Naive thymus-derived CD4-positive, alpha-beta T cell (primary cell): ENCODE measurements at regions of chr19 and their contacts with region 1.

Region 1: GRCh38 chr19:18000935-18001778 is 6.8 kb upstream of the ARRDC2 start:
- DNase-seq: peak; percentile 89 to 96 (median 95)
- ATAC-seq: peak; percentile 90
- H3K4me3 ChIP-seq: peak overlapping the region; percentile 78
- H3K4me3 Mint-ChIP-seq: peak overlapping the region; percentile 85 to 98 (median 93)
- H3K27ac ChIP-seq: peak overlapping the region; percentile 97
- H3K27ac Mint-ChIP-seq: peak overlapping the region; percentile 94 to 100 (median 99)
- H3K4me1 ChIP-seq: peaks cover 19 to 24% of the 10 kb centered on the region in 2 donors
- H3K4me1 Mint-ChIP-seq: peaks cover 10 to 35% (median 18%) of the 10 kb centered on the region in 7 donors
- H3K27me3 ChIP-seq: no peaks in the 10 kb centered on the region
- H3K27me3 Mint-ChIP-seq: peaks cover 0 to 2% (median 0%) of the 10 kb centered on the region in 5 donors

Region 2: DNA sequence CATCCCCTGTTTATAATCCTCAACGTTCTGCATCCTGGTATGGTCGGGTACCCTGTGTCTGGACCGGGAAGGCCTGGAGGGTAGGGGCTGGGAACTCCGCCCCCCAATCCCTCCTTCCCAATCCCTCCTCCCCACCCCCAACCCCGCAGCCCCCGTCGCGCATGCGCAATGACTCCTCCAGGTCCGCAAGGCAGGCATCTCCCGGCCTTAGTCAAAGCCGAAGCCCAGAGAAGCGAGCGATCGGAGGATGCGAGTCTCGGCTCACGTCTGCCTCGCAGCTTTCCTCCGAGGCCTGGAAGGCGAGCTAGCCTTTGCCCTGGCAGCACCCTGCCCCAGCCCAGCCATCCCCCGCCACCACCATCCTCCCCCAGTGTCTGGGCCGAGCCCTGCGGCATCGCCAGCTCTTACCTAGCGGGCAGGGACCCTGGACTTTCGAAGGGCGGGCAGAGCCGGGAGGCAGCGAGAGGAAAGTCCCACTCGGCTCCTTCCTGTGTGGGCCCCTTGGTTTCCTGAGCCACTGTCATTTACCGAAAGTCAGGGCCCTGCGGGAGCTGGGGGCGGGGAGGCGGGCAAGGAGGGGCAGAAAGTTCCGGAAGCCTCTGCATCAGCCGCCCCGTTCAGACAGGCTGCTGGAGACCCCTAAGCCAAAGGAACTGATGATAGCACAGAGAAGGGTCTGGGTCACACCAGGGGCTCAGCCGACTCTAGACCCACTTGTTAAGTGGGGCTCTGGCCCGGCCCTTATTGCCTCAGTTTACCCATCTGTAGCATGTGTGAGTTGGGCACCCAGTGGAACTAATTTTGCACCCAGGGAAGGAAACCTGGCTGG is 153.4 kb before region 1 on chr19 and contains the start of gene JAK3:
- CTCF ChIA-PET with region 1: no interaction called
- POLR2A ChIA-PET with region 1: interaction called, 3 read pairs
- intact Hi-C with region 1: loop called in 1 of 2 experiments (anchors 2 kb)
- DNase-seq: peak; percentile 66 to 91 (median 88)
- ATAC-seq: peak; percentile 89
- H3K4me3 ChIP-seq: peak within 1 kb of the TSS; percentile 86
- H3K4me3 Mint-ChIP-seq: peak within 1 kb of the TSS; percentile 87 to 97 (median 93)
- H3K27ac ChIP-seq: peak within 1 kb of the TSS; percentile 95
- H3K27ac Mint-ChIP-seq: peak within 1 kb of the TSS; percentile 92 to 100 (median 97)
- H3K4me1 ChIP-seq: peaks cover 55 to 70% of the 10 kb centered on the region in 2 donors
- H3K4me1 Mint-ChIP-seq: peaks cover 45 to 77% (median 65%) of the 10 kb centered on the region in 7 donors
- H3K27me3 ChIP-seq: no peaks in the 10 kb centered on the region
- H3K27me3 Mint-ChIP-seq: peaks cover 0 to 2% (median 0%) of the 10 kb centered on the region in 5 donors
- total RNA-seq, gene JAK3: 154 to 296 (median 202) TPM

Region 3: GRCh38 chr19:17932485-17933338 is 68.4 kb before region 1 on chr19 and contains the start of gene CCDC124:
- CTCF ChIA-PET with region 1: interaction called, 224 read pairs
- POLR2A ChIA-PET with region 1: interaction called, 11 read pairs
- intact Hi-C with region 1: no loop called
- DNase-seq: peak; percentile 89 to 96 (median 94)
- ATAC-seq: peak; percentile 99
- H3K4me3 ChIP-seq: peak within 1 kb of the TSS; percentile 69
- H3K4me3 Mint-ChIP-seq: peak within 1 kb of the TSS; percentile 85 to 97 (median 93)
- H3K27ac ChIP-seq: peak within 1 kb of the TSS; percentile 86
- H3K27ac Mint-ChIP-seq: peak within 1 kb of the TSS; percentile 90 to 97 (median 95)
- H3K4me1 ChIP-seq: peaks cover 10 to 11% of the 10 kb centered on the region in 2 donors
- H3K4me1 Mint-ChIP-seq: peaks cover 6 to 24% (median 15%) of the 10 kb centered on the region in 7 donors
- H3K27me3 ChIP-seq: no peaks in the 10 kb centered on the region
- H3K27me3 Mint-ChIP-seq: peaks cover 0 to 2% (median 0%) of the 10 kb centered on the region in 5 donors
- total RNA-seq, gene CCDC124: 28.7 to 60.5 (median 32.6) TPM

Region 4: DNA sequence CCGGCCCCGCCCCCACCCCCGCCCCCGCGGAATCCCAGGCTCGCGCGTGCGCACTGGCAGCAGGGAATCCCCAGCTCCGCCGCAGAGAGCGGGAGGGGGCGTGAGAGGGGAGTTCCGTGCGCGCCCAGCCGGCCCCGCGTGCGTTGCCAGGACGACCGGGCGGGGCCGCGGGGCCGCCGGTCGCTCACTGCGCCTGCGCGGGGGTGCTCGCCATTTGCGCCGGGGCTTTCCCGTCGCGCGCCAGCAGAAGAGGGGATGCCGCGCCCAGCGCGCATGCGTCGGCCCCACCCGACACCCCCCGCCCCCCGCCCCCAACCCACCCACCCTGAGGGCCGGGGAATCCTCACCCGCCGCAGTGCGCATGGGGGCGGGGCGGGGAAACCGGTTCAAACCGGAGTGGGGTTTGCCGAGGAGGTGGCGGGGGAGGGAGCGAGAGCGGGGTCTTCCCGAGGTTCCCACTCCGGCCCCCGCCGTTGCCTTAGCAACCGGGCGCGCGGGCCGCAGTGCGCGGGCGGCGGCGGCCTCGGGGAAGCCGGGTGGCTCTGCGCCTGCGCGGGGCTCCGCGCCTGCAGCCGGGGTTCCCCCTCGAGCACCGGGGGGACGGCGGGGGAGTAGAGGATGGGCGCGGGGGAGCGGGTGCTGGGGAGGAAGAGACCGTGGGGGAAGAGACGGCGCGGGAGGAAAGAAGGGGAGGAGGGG is 53.2 kb before region 1 on chr19:
- CTCF ChIA-PET with region 1: interaction called, 23 read pairs
- POLR2A ChIA-PET with region 1: interaction called, 14 read pairs
- intact Hi-C with region 1: loop called (anchors 1 to 2 kb)
- DNase-seq: peak; percentile 91 to 99 (median 95)
- ATAC-seq: peak; percentile 87
- H3K4me3 ChIP-seq: peak overlapping the region; percentile 41
- H3K4me3 Mint-ChIP-seq: peak overlapping the region; percentile 68 to 88 (median 82)
- H3K27ac ChIP-seq: peak overlapping the region; percentile 99
- H3K27ac Mint-ChIP-seq: peak overlapping the region in 7 of 9 donors; percentile 48 to 96 (median 87)
- H3K4me1 ChIP-seq: peaks cover 37 to 50% of the 10 kb centered on the region in 2 donors
- H3K4me1 Mint-ChIP-seq: peaks cover 22 to 55% (median 43%) of the 10 kb centered on the region in 7 donors
- H3K27me3 ChIP-seq: peaks cover 18 to 28% of the 10 kb centered on the region in 2 donors
- H3K27me3 Mint-ChIP-seq: peaks cover 27 to 43% (median 30%) of the 10 kb centered on the region in 5 donors

Region 5: DNA sequence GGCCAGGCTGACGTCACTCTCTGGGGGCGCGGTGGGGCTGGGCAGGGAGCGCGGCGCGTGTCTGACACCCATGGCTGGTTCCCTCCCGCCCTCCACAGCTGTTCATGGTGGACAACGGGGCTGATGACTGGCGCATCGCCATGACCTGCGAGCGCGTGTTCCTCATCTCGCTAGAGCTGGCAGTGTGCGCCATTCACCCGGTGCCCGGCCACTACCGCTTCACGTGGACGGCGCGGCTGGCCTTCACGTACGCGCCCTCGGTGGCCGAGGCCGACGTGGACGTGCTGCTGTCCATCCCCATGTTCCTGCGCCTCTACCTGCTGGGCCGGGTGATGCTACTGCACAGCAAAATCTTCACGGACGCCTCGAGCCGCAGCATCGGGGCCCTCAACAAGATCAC is 19.5 kb before region 1 on chr19:
- CTCF ChIA-PET with region 1: no interaction called
- POLR2A ChIA-PET with region 1: no interaction called
- intact Hi-C with region 1: no loop called
- DNase-seq: no peak
- ATAC-seq: no peak
- H3K4me3 ChIP-seq: no peak overlapping the region
- H3K4me3 Mint-ChIP-seq: no peak overlapping the region
- H3K27ac ChIP-seq: no peak overlapping the region
- H3K27ac Mint-ChIP-seq: no peak overlapping the region
- H3K4me1 ChIP-seq: no peaks in the 10 kb centered on the region
- H3K4me1 Mint-ChIP-seq: peaks cover 0 to 9% (median 0%) of the 10 kb centered on the region in 7 donors
- H3K27me3 ChIP-seq: no peaks in the 10 kb centered on the region
- H3K27me3 Mint-ChIP-seq: peaks cover 5 to 22% (median 10%) of the 10 kb centered on the region in 5 donors

Region 6: DNA sequence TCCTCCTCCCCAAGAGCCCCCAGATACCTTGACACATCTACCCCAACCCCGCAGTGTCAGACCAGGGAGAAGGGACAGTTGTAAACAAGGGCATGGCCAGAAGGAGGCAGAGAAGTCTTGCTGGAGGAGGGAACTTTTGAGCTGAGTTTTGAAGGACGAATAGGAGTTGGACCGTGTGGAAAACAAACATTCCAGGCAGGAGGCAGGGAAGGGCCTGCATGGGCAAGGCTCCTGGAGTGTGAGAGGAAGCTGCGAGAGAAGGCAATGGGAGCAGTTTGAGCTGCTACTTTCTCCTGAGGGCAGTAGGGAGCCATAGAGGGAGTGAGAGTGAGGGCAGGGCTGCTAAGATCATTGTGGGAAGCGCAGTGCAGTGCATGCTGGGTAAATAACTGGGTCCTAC is 62.3 kb after region 1 on chr19:
- CTCF ChIA-PET with region 1: interaction called, 147 read pairs
- POLR2A ChIA-PET with region 1: interaction called, 961 read pairs
- intact Hi-C with region 1: no loop called
- DNase-seq: peak in 5 of 9 donors; percentile 31 to 45 (median 33)
- ATAC-seq: no peak
- H3K4me3 ChIP-seq: no peak overlapping the region
- H3K4me3 Mint-ChIP-seq: no peak overlapping the region
- H3K27ac ChIP-seq: no peak overlapping the region
- H3K27ac Mint-ChIP-seq: peak overlapping the region in 4 of 9 donors; percentile 28 to 76 (median 55)
- H3K4me1 ChIP-seq: peaks cover 4% of the 10 kb centered on the region in 2 donors
- H3K4me1 Mint-ChIP-seq: peaks cover 0 to 6% (median 4%) of the 10 kb centered on the region in 7 donors
- H3K27me3 ChIP-seq: no peaks in the 10 kb centered on the region
- H3K27me3 Mint-ChIP-seq: no peaks in the 10 kb centered on the region

Region 7: DNA sequence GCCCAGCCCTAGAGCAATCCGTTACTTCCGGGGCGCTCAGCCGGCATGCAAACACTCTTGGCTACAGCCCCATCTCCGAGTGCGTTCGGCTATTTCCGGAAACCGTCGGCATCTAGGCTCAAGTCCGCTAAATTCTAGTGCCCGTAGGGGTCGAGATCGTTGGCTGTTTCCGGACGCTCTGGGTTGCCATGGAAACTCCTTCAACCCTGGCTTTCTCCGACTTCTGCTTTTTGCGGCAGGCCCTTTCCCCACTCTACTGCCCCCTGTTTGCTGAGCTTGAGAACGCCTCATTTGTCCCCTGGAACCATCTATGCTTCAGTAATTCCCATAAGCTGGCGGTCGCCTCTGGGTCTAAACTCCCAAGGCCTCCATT is 151.3 kb after region 1 on chr19:
- CTCF ChIA-PET with region 1: interaction called, 4 read pairs
- POLR2A ChIA-PET with region 1: interaction called, 3 read pairs
- intact Hi-C with region 1: loop called in 1 of 2 experiments (anchors 1 kb)
- DNase-seq: peak; percentile 92 to 99 (median 97)
- ATAC-seq: peak; percentile 76
- H3K4me3 ChIP-seq: peak overlapping the region; percentile 82
- H3K4me3 Mint-ChIP-seq: peak overlapping the region; percentile 81 to 95 (median 88)
- H3K27ac ChIP-seq: peak overlapping the region; percentile 88
- H3K27ac Mint-ChIP-seq: peak overlapping the region; percentile 89 to 97 (median 95)
- H3K4me1 ChIP-seq: peaks cover 16 to 20% of the 10 kb centered on the region in 2 donors
- H3K4me1 Mint-ChIP-seq: peaks cover 9 to 32% (median 24%) of the 10 kb centered on the region in 7 donors
- H3K27me3 ChIP-seq: no peaks in the 10 kb centered on the region
- H3K27me3 Mint-ChIP-seq: no peaks in the 10 kb centered on the region

Region 8: DNA sequence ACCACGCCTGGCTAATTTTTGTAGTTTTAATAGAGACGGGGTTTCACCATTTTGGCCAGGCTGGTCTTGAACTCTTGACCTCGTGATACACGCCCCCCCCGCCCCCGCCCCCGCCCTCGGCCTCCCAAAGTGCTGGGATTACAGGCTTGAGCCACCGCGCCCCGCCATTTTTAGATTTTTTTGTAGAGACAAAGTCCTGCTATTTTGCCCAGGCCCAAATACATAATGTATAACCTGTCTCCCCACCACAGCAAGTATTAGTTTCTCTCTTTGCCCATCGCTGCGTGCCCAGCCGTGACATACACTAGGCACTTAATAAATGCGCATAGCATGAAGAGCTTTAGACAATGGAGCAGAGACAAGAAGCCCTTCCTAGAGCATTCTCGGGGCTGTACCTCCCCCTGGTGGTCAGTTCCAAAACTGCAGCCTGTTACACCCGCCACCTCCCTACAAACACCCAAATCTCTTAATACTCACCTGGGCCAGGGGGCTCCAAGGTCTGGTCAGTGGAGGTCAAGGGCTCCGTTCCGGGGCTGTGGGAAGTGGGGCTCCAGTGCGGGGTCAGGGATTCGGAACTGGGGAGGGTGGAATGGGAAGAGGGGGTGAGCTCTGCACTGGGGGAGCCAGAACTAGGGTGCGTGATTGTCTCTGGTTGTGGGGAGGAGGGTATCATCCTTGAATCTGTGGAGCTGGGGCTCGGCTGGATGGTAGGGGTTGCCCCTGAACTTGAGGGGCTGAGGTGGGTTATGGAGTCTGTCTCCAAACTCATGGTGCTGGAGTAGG is 250.6 kb after region 1 on chr19:
- CTCF ChIA-PET with region 1: no interaction called
- POLR2A ChIA-PET with region 1: no interaction called
- intact Hi-C with region 1: loop called in 1 of 2 experiments (anchors 2 kb)
- DNase-seq: peak; percentile 65 to 87 (median 77)
- ATAC-seq: peak; percentile 90
- H3K4me3 ChIP-seq: no peak overlapping the region
- H3K4me3 Mint-ChIP-seq: no peak overlapping the region
- H3K27ac ChIP-seq: no peak overlapping the region
- H3K27ac Mint-ChIP-seq: peak overlapping the region in 2 of 9 donors; percentile 2 to 62
- H3K4me1 ChIP-seq: no peaks in the 10 kb centered on the region
- H3K4me1 Mint-ChIP-seq: peaks cover 0 to 7% (median 5%) of the 10 kb centered on the region in 7 donors
- H3K27me3 ChIP-seq: no peaks in the 10 kb centered on the region
- H3K27me3 Mint-ChIP-seq: peaks cover 22 to 36% (median 34%) of the 10 kb centered on the region in 5 donors